ENCODE measurements at regions of chr2 and their contacts with region 1.

Region 1: GRCh38 chr2:162591403-162592083 is 247.0 kb downstream of the KCNH7 start:
- DNase-seq: no peak
- H3K4me3 ChIP-seq: no peak overlapping the region
- H3K27ac ChIP-seq: no peak overlapping the region
- H3K4me1 ChIP-seq: no peaks in the 10 kb centered on the region
- H3K27me3 ChIP-seq: no peaks in the 10 kb centered on the region
- CTCF ChIP-seq: no peak
- EP300 ChIP-seq: no peak
- POLR2A ChIP-seq: no peak
- RAD21 ChIP-seq: no peak

Region 2: GRCh38 chr2:162184821-162185446 is 406.6 kb before region 1 on chr2:
- CTCF ChIA-PET with region 1: no interaction called
- POLR2A ChIA-PET with region 1: no interaction called
- DNase-seq: no peak
- H3K4me3 ChIP-seq: no peak overlapping the region
- H3K27ac ChIP-seq: no peak overlapping the region
- H3K4me1 ChIP-seq: no peaks in the 10 kb centered on the region
- H3K27me3 ChIP-seq: no peaks in the 10 kb centered on the region
- CTCF ChIP-seq: no peak
- EP300 ChIP-seq: no peak
- POLR2A ChIP-seq: no peak
- RAD21 ChIP-seq: no peak

Region 3: DNA sequence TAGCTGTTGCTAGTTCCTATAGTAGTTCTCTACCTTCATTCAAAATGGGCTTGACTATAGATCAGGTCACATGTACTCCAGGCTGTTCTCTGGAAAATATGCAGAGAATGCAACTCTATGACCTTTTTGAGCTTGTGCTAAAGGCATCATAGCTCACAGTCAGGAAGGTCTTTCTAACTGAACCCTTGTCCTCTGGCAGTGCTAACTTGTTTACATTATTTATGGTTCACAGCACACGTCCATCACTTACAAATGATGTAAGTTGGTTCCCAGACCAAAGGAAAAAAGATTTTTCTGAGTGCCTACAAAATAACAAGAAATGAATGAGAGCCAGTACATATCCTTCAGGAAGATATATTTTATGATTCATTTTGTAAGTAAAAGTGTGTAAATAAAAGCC is 11.6 kb before region 1 on chr2:
- CTCF ChIA-PET with region 1: interaction called, 10 read pairs
- POLR2A ChIA-PET with region 1: no interaction called
- DNase-seq: no peak
- H3K4me3 ChIP-seq: no peak overlapping the region
- H3K27ac ChIP-seq: no peak overlapping the region
- H3K4me1 ChIP-seq: no peaks in the 10 kb centered on the region; a peak in 1 of 7 replicates
- H3K27me3 ChIP-seq: no peaks in the 10 kb centered on the region
- CTCF ChIP-seq: no peak
- EP300 ChIP-seq: no peak
- POLR2A ChIP-seq: no peak
- RAD21 ChIP-seq: no peak